ENCODE measurements at regions of chr1 and their contacts with region 1.

Region 1: GRCh38 chr1:50968158-50968820 is 1.8 kb upstream of the CDKN2C start:
- DNase-seq: peak; percentile 87
- H3K4me3 Mint-ChIP-seq: peak overlapping the region; percentile 90
- H3K27ac Mint-ChIP-seq: peak overlapping the region; percentile 96
- H3K4me1 Mint-ChIP-seq: peaks cover 21% of the 10 kb centered on the region
- H3K27me3 Mint-ChIP-seq: peaks cover 11% of the 10 kb centered on the region

Region 2: DNA sequence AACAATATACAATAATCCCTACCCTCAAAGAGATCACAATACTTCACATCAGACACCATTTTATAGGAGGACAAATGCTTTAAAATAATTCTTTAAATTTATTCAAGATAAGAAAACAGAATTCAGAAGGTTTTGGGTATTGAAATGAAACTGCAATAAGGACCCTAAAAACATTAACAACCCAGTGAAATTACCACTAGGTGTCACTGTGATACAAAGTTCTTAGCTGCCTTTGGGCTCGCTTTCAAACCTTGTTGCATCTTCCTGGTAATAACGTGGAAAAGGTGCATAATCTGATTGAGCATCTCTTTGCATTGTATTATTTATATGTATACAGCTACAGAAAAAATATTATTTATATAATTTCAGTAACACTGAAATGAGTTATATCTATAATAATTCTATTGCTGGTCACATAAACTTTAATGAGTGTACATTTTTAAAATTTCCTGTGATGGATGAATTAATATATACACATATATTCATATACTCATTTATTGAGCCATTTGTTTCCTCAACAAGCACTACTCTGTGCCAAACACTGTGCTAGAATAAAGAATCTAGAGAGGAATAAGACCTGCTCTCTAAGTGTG is 193.4 kb before region 1 on chr1:
- CTCF ChIA-PET with region 1: interaction called, 9 read pairs
- intact Hi-C with region 1: loop called (anchors 2 kb)
- DNase-seq: peak; percentile 8
- H3K4me3 Mint-ChIP-seq: no peak overlapping the region
- H3K27ac Mint-ChIP-seq: no peak overlapping the region
- H3K4me1 Mint-ChIP-seq: peaks cover 7% of the 10 kb centered on the region
- H3K27me3 Mint-ChIP-seq: no peaks in the 10 kb centered on the region

Region 3: DNA sequence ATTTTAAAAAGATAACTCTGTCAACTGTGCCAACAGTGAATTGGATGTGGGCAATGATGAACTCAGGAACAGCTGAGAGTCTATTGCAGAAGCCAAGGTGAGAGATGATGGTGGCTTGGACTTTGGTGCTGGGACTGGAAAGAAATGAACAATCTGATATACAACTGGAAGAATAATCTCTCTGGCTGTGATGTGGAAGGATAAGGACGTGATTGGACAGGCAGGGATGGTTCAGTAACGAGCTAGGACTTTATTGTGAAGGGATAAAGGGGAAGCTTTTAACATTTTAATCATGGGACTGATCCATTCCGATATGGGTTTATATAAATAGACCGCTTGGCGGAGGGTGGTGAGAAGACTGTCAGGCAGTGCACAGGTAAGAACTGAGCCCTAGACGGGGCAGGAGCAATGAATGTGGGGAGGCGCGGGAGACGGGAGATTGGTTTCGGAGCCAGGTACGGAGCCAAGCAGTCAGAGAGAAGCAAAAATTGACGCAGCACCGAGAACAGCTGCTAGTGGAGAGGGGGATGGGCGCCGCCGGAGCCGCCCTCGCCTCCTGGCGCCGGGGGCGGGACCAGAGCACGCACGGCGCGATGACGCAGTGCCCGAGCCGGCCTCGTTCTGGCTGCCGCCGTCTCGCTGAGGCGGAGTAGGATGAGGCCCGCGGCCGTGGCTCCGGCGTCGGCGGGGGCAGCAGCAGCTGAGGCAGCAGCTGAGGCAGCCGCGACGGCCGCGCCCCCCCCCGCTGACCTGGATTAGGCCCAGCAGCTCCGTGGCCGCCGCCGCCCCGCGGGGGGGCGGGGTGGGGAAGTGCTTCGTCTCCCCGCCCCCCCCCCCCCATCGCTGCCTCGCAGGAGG is 267.6 kb after region 1 on chr1 and contains the start of gene RNF11:
- CTCF ChIA-PET with region 1: no interaction called
- intact Hi-C with region 1: loop called (anchors 2 kb)
- DNase-seq: peak; percentile 93
- H3K4me3 Mint-ChIP-seq: peak within 1 kb of the TSS; percentile 96
- H3K27ac Mint-ChIP-seq: peak within 1 kb of the TSS; percentile 89
- H3K4me1 Mint-ChIP-seq: peaks cover 35% of the 10 kb centered on the region
- H3K27me3 Mint-ChIP-seq: no peaks in the 10 kb centered on the region
- total RNA-seq, gene RNF11: 14.9 to 17.7 TPM

Region 4: GRCh38 chr1:51519048-51519864 is 551.0 kb after region 1 on chr1 and contains the start of gene EPS15:
- CTCF ChIA-PET with region 1: no interaction called
- intact Hi-C with region 1: loop called (anchors 5 kb)
- DNase-seq: peak; percentile 89
- H3K4me3 Mint-ChIP-seq: peak within 1 kb of the TSS; percentile 87
- H3K27ac Mint-ChIP-seq: peak within 1 kb of the TSS; percentile 84
- H3K4me1 Mint-ChIP-seq: peaks cover 47% of the 10 kb centered on the region
- H3K27me3 Mint-ChIP-seq: no peaks in the 10 kb centered on the region
- total RNA-seq, gene EPS15: 56.0 to 57.0 TPM

Region 5: GRCh38 chr1:51729156-51729823 is 761.0 kb after region 1 on chr1:
- CTCF ChIA-PET with region 1: no interaction called
- intact Hi-C with region 1: loop called (anchors 2 kb)
- DNase-seq: peak; percentile 97
- H3K4me3 Mint-ChIP-seq: peak overlapping the region; percentile 87
- H3K27ac Mint-ChIP-seq: peak overlapping the region; percentile 87
- H3K4me1 Mint-ChIP-seq: peaks cover 33% of the 10 kb centered on the region
- H3K27me3 Mint-ChIP-seq: no peaks in the 10 kb centered on the region

Measured in activated naive CD4-positive, alpha-beta T cell treated with anti-CD3 and anti-CD28 coated beads for 36 hours (primary cell).